K562 (cell line): ENCODE measurements at regions of chr1 and their contacts with region 1.

Region 1: DNA sequence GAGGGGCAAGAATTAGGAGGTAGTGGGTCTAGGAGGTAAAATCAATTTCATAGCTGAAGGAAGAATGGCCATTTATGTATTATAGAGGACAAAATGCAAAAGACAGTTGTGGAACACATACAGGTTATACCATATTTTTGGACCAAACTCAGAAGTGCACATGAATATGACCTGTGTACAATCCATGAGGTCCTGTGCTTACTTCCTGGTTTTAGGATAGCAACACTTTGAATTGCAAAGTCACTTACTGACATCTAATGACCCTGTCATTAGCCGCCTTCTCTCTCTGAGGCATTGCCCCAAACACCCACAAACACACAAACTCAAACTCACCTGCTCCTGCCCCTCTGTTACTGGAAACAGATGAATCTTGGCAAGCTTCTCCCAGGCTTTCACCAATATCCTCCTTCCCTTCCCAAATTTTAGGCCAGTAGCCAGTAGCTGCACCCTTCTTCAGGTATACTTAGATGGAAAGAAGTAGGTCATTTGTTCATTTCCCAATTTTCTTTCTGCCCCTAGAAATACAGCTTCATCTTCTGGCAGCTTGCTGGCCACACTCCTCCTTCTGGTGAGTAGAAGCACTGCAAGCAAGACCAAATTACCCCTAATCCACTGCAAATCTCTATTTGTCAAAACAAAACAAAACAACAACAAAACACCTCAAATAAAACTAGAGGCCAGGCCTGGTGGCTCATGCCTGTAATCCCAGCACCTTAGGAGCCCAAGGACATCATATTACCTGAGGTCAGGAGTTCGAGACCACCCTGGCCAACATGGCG is 13.7 kb upstream of the RPL5 start:
- DNase-seq: peak; percentile 42 to 57 (median 53)
- ATAC-seq: peak; percentile 81
- H3K4me3 ChIP-seq: no peak overlapping the region
- H3K27ac ChIP-seq: no peak overlapping the region
- H3K4me1 ChIP-seq: no peaks in the 10 kb centered on the region
- H3K27me3 ChIP-seq: no peaks in the 10 kb centered on the region
- CTCF ChIP-seq: peak; percentile 70 to 80 (median 71)
- EP300 ChIP-seq: no peak
- POLR2A ChIP-seq: no peak
- RAD21 ChIP-seq: peak; percentile 61 to 83

Region 2: DNA sequence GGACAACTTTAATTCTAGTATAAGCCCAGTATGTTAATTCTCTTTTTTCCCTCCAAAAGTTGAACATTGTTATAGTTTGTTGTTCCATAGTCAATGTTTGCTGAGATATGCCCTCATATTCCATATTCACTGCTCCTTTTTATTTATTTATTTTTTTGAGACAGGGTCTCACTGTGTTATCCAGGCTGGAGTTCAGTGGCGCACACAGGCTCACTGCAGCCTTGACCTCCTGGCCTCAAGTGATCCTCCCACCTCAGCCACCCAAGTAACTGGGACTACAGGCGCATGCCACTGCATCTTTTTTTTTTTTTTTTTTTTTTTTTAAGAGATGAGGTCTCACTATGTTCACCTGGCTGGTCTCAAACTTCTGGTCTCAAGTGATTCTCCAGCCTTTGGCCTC is 370.2 kb before region 1 on chr1:
- CTCF ChIA-PET with region 1: no interaction called
- POLR2A ChIA-PET with region 1: no interaction called
- in situ Hi-C with region 1: no loop called
- intact Hi-C with region 1: no loop called
- DNase-seq: no peak
- ATAC-seq: no peak
- H3K4me3 ChIP-seq: no peak overlapping the region
- H3K27ac ChIP-seq: no peak overlapping the region
- H3K4me1 ChIP-seq: peaks cover 9 to 14% of the 10 kb centered on the region in 2 experiments
- H3K27me3 ChIP-seq: no peaks in the 10 kb centered on the region
- CTCF ChIP-seq: no peak
- EP300 ChIP-seq: no peak
- POLR2A ChIP-seq: no peak
- RAD21 ChIP-seq: no peak

Region 3: GRCh38 chr1:92623187-92623778 is 194.9 kb before region 1 on chr1:
- CTCF ChIA-PET with region 1: no interaction called
- POLR2A ChIA-PET with region 1: no interaction called
- in situ Hi-C with region 1: no loop called
- intact Hi-C with region 1: loop called (anchors 10 kb)
- DNase-seq: peak in 2 of 4 experiments; percentile 8 to 14
- ATAC-seq: peak; percentile 72
- H3K4me3 ChIP-seq: no peak overlapping the region
- H3K27ac ChIP-seq: no peak overlapping the region
- H3K4me1 ChIP-seq: no peaks in the 10 kb centered on the region
- H3K27me3 ChIP-seq: no peaks in the 10 kb centered on the region
- CTCF ChIP-seq: peak; percentile 18 to 68 (median 27); a peak in 3 of 6 replicates
- EP300 ChIP-seq: no peak
- POLR2A ChIP-seq: no peak
- RAD21 ChIP-seq: peak; percentile 73 to 81

Region 4: DNA sequence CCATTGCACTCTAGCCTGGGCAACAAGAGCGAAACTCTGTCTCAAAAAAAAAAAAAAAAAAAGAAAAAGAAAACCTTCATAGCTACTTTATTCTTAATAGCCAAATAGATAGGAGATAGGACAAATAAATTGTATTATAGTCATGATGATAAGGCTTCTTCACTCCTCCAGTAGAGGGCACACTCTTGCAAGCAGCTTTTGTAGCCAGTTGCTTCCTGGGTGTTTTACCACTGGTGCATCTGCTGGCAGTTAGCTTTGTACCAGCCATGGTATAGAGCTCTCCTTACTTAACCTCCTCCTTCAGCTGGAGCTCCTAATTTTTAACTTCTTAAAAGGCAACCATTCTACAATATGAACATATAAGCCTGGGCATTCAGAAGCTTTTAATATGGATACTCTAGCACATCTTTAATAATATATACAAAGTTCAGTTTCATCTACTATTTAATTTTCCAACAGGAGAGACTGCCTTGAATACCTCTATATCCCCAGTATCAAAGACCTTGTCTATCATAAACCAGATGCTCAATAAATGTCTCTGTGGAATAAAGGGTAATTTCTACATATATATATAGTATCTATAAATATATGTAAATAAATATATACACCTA is 69.0 kb before region 1 on chr1:
- CTCF ChIA-PET with region 1: interaction called, 7 read pairs
- POLR2A ChIA-PET with region 1: no interaction called
- in situ Hi-C with region 1: no loop called
- intact Hi-C with region 1: loop called (anchors 1 kb)
- DNase-seq: peak; percentile 40 to 76 (median 52)
- ATAC-seq: peak; percentile 89
- H3K4me3 ChIP-seq: no peak overlapping the region
- H3K27ac ChIP-seq: no peak overlapping the region
- H3K4me1 ChIP-seq: peaks cover 0 to 6% of the 10 kb centered on the region in 2 experiments; a peak in 3 of 5 replicates
- H3K27me3 ChIP-seq: no peaks in the 10 kb centered on the region
- CTCF ChIP-seq: peak; percentile 73 to 87 (median 77)
- EP300 ChIP-seq: no peak
- POLR2A ChIP-seq: no peak
- RAD21 ChIP-seq: peak; percentile 49 to 72

Region 5: DNA sequence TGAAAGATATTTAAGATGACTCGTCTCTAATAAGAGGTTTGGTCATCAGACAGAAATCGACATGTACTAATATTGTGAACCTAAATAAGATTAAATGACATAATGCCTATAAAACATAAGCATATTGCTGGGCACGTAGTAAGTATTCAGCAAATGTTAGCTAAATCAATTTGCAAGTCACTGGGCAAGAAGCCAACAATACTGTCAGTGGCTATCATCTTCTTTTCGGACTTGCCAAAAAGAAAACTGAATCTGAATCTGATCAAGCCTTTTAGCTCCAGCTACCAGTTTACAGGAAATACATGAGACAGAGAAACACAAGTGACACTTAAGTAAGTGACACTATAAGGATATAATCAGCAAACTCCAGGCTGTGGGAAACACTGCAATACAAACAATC is 59.6 kb after region 1 on chr1:
- CTCF ChIA-PET with region 1: no interaction called
- POLR2A ChIA-PET with region 1: no interaction called
- in situ Hi-C with region 1: no loop called
- intact Hi-C with region 1: no loop called
- DNase-seq: peak in 1 of 4 experiments; percentile 39
- ATAC-seq: no peak
- H3K4me3 ChIP-seq: no peak overlapping the region
- H3K27ac ChIP-seq: no peak overlapping the region
- H3K4me1 ChIP-seq: peaks cover 0 to 4% of the 10 kb centered on the region in 2 experiments; a peak in 1 of 5 replicates
- H3K27me3 ChIP-seq: no peaks in the 10 kb centered on the region
- CTCF ChIP-seq: no peak
- EP300 ChIP-seq: 0 out of 2 replicates have a peak, but pooled peaks have one; percentile 7
- POLR2A ChIP-seq: no peak
- RAD21 ChIP-seq: no peak

Region 6: GRCh38 chr1:93426181-93426580 is 608.0 kb after region 1 on chr1:
- CTCF ChIA-PET with region 1: no interaction called
- POLR2A ChIA-PET with region 1: no interaction called
- in situ Hi-C with region 1: no loop called
- intact Hi-C with region 1: no loop called
- DNase-seq: no peak
- ATAC-seq: no peak
- H3K4me3 ChIP-seq: no peak overlapping the region
- H3K27ac ChIP-seq: no peak overlapping the region
- H3K4me1 ChIP-seq: no peaks in the 10 kb centered on the region
- H3K27me3 ChIP-seq: no peaks in the 10 kb centered on the region
- CTCF ChIP-seq: no peak
- EP300 ChIP-seq: no peak
- POLR2A ChIP-seq: no peak
- RAD21 ChIP-seq: no peak